ENCODE measurements at regions of chr3 and their contacts with region 1.

Region 1: DNA sequence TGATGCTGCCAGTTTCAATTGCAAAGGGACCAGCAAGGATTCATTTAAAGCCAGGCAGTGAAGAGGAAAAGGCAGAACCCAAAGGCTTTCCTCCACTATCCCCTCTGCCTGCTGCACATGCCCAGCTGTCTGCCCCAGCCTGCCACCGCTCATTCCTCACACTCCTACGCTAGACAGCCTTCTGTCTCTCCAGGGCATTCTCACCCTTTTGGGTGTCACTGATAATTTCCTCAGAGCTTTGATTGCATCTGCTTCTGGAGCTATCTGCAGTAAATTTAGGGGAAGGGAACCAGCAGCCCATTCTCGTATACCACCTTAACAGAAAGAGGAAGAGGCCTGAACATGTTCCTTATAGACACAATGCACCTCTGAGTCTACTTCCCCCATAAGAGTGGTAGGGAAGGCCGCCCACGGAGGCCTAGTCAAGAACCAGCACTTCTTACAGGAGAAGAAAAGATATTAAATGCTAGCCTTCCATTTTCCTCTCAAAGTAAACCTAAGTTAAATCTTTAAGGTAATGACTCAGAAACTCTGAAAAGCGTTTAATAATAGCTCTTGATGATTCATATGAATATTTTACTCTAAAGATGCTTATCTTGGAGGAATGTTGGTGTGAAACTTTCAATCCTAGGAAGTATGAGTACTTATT is 20.9 kb downstream of the NUDT16 start:
- DNase-seq: peak; percentile 87
- H3K4me3 ChIP-seq: no peak overlapping the region
- H3K27ac ChIP-seq: peak overlapping the region; percentile 87
- H3K4me1 ChIP-seq: peaks cover 24% of the 10 kb centered on the region
- H3K27me3 ChIP-seq: no peaks in the 10 kb centered on the region
- CTCF ChIP-seq: no peak
- POLR2A ChIP-seq: no peak

Region 2: DNA sequence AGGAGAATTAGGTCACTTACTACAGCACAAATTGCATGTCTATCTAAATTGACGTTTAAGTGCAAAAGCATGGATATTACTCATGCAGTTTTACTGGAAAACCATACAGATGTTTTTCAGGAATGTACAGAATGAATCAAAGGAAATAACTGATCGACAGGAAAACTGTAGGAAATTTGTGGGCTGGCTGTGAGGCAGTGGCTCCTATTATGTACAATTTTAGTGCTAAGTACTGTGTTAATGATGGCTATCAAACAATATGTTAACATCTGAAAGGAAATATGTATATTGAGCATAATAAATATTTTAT is 14.1 kb before region 1 on chr3:
- CTCF ChIA-PET with region 1: no interaction called
- POLR2A ChIA-PET with region 1: no interaction called
- dilution Hi-C with region 1: no loop called
- intact Hi-C with region 1: loop called (anchors 1 kb)
- DNase-seq: peak; percentile 83
- H3K4me3 ChIP-seq: no peak overlapping the region
- H3K27ac ChIP-seq: peak overlapping the region; percentile 85
- H3K4me1 ChIP-seq: peaks cover 48% of the 10 kb centered on the region
- H3K27me3 ChIP-seq: no peaks in the 10 kb centered on the region
- CTCF ChIP-seq: no peak
- POLR2A ChIP-seq: no peak